ENCODE measurements at regions of chr21 and their contacts with region 1.

Region 1: DNA sequence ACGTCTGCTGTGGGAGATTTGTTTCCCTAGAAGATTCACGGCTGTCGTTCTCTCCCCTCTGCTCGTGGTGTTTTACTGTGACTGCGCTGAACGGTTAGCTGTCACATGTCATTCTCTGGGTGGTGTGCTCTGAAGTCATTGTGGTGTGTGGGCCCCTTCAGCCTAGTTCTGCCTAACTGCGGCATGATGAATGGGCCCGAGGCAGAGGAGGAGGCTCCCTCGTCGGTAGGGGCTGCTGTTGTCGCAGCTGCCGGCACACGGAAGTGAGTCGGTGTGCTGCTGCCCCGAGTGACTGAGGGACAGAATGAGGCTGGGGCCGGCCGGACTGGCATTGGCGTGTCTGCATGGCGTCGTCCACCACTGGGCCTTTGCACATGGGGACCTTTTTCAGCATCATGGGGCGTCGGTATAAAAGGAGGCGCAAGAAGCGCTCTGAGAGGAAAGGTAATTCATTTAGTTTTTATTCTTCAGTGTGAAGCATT is 77.9 kb downstream of the ADARB1 start:
- DNase-seq: peak; percentile 91
- H3K4me3 Mint-ChIP-seq: peak overlapping the region; percentile 75
- H3K27ac Mint-ChIP-seq: peak overlapping the region; percentile 25
- H3K4me1 Mint-ChIP-seq: peaks cover 32% of the 10 kb centered on the region
- H3K27me3 Mint-ChIP-seq: no peaks in the 10 kb centered on the region

Region 2: GRCh38 chr21:45074048-45074817 is 78.1 kb before region 1 on chr21 and contains the start of gene ADARB1:
- intact Hi-C with region 1: no loop called
- DNase-seq: peak; percentile 91
- H3K4me3 Mint-ChIP-seq: peak within 1 kb of the TSS; percentile 95
- H3K27ac Mint-ChIP-seq: peak within 1 kb of the TSS; percentile 91
- H3K4me1 Mint-ChIP-seq: peaks cover 39% of the 10 kb centered on the region
- H3K27me3 Mint-ChIP-seq: peaks cover 3% of the 10 kb centered on the region
- total RNA-seq, gene ADARB1: 21.8 and 24.6 TPM in 2 replicates

Region 3: GRCh38 chr21:45167796-45168222 is 15.5 kb after region 1 on chr21:
- intact Hi-C with region 1: no loop called
- DNase-seq: peak; percentile 40
- H3K4me3 Mint-ChIP-seq: no peak overlapping the region
- H3K27ac Mint-ChIP-seq: no peak overlapping the region
- H3K4me1 Mint-ChIP-seq: peaks cover 13% of the 10 kb centered on the region
- H3K27me3 Mint-ChIP-seq: no peaks in the 10 kb centered on the region

Region 4: GRCh38 chr21:45228171-45228641 is 75.9 kb after region 1 on chr21:
- intact Hi-C with region 1: loop called (anchors 1 kb)
- DNase-seq: peak; percentile 83
- H3K4me3 Mint-ChIP-seq: no peak overlapping the region
- H3K27ac Mint-ChIP-seq: peak overlapping the region; percentile 3
- H3K4me1 Mint-ChIP-seq: peaks cover 30% of the 10 kb centered on the region
- H3K27me3 Mint-ChIP-seq: peaks cover 8% of the 10 kb centered on the region

Region 5: GRCh38 chr21:45270306-45270821 is 118.1 kb after region 1 on chr21:
- intact Hi-C with region 1: loop called (anchors 5 kb)
- DNase-seq: no peak
- H3K4me3 Mint-ChIP-seq: no peak overlapping the region
- H3K27ac Mint-ChIP-seq: no peak overlapping the region
- H3K4me1 Mint-ChIP-seq: peaks cover 15% of the 10 kb centered on the region
- H3K27me3 Mint-ChIP-seq: no peaks in the 10 kb centered on the region